Naive thymus-derived CD4-positive, alpha-beta T cell (primary cell): ENCODE measurements at regions of chr10 and their contacts with region 1.

Region 1: GRCh38 chr10:8130973-8131911 is 76.8 kb downstream of the GATA3 start:
- DNase-seq: peak in 1 of 9 donors; percentile 56
- ATAC-seq: no peak
- H3K4me3 ChIP-seq: no peak overlapping the region
- H3K4me3 Mint-ChIP-seq: peak overlapping the region in 1 of 10 donors; percentile 53
- H3K27ac ChIP-seq: no peak overlapping the region
- H3K27ac Mint-ChIP-seq: peak overlapping the region in 1 of 9 donors; percentile 73
- H3K4me1 ChIP-seq: peaks cover 0 to 2% of the 10 kb centered on the region in 2 donors
- H3K4me1 Mint-ChIP-seq: peaks cover 4 to 47% (median 14%) of the 10 kb centered on the region in 7 donors
- H3K27me3 ChIP-seq: no peaks in the 10 kb centered on the region
- H3K27me3 Mint-ChIP-seq: peaks cover 1 to 16% (median 10%) of the 10 kb centered on the region in 5 donors

Region 2: GRCh38 chr10:8088504-8088903 is 42.7 kb before region 1 on chr10:
- CTCF ChIA-PET with region 1: no interaction called
- POLR2A ChIA-PET with region 1: no interaction called
- intact Hi-C with region 1: loop called in 1 of 2 experiments (anchors 5 kb)
- DNase-seq: peak in 7 of 9 donors; percentile 15 to 49 (median 25)
- ATAC-seq: peak; percentile 90
- H3K4me3 ChIP-seq: no peak overlapping the region
- H3K4me3 Mint-ChIP-seq: peak overlapping the region in 3 of 10 donors; percentile 19 to 62 (median 52)
- H3K27ac ChIP-seq: no peak overlapping the region
- H3K27ac Mint-ChIP-seq: peak overlapping the region in 2 of 9 donors; percentile 51 to 76
- H3K4me1 ChIP-seq: peaks cover 11 to 19% of the 10 kb centered on the region in 2 donors
- H3K4me1 Mint-ChIP-seq: peaks cover 0 to 44% (median 21%) of the 10 kb centered on the region in 7 donors
- H3K27me3 ChIP-seq: no peaks in the 10 kb centered on the region
- H3K27me3 Mint-ChIP-seq: no peaks in the 10 kb centered on the region

Region 3: GRCh38 chr10:8163829-8164228 is 32.6 kb after region 1 on chr10:
- CTCF ChIA-PET with region 1: no interaction called
- POLR2A ChIA-PET with region 1: no interaction called
- intact Hi-C with region 1: no loop called
- DNase-seq: no peak
- ATAC-seq: no peak
- H3K4me3 ChIP-seq: no peak overlapping the region
- H3K4me3 Mint-ChIP-seq: no peak overlapping the region
- H3K27ac ChIP-seq: no peak overlapping the region
- H3K27ac Mint-ChIP-seq: peak overlapping the region in 1 of 9 donors; percentile 18
- H3K4me1 ChIP-seq: no peaks in the 10 kb centered on the region
- H3K4me1 Mint-ChIP-seq: peaks cover 0 to 5% (median 0%) of the 10 kb centered on the region in 7 donors
- H3K27me3 ChIP-seq: no peaks in the 10 kb centered on the region
- H3K27me3 Mint-ChIP-seq: peaks cover 0 to 20% (median 0%) of the 10 kb centered on the region in 5 donors